CD4-positive, alpha-beta memory T cell (primary cell): ENCODE measurements at regions of chr2 and their contacts with region 1.

Region 1: DNA sequence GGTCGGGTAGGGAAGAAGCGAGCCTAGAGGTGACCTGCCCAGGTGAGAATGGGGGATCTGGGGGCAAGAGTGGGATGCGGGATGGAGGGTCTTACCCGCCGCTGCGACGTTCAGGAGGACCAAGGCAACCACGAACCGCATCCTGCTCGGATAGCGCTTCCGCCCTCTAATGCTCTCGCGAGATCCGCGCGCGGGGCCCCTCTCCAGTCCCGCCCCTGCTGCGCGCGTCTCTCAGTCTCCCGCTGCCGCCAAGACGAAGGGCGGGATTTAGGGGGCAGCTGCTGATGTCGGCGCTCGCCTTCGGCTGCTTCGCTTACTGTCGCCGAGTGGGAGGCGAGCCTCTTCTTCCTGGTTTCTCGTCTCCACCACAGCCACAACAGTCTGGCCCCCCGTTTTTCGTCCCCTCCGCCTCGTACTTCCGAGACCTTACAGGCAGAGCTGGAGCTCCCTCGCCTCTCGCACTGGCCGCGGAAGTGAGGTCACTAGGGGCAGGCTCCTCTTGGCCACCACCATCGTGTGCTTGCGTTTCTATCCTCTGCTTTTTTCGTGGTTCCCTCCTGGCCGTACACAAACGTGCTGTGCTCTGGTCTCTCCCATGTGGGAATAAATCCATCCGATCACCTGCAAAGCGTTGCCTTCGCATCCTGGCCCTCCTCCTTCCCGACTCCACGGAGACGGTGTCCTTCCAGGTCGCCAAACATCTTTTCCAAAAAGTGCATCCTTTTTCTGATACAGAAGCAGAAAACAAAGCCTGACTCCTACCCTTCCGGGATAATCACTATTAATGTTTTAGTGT is at the start of gene TGOLN2:
- DNase-seq: peak; percentile 93 to 96 (median 95)
- H3K4me3 ChIP-seq: peak within 1 kb of the TSS; percentile 99 to 100
- H3K4me3 Mint-ChIP-seq: peak within 1 kb of the TSS; percentile 92 to 100 (median 98)
- H3K27ac ChIP-seq: peak within 1 kb of the TSS; percentile 98
- H3K27ac Mint-ChIP-seq: peak within 1 kb of the TSS; percentile 97 to 100 (median 100)
- H3K4me1 ChIP-seq: peaks cover 44% of the 10 kb centered on the region
- H3K4me1 Mint-ChIP-seq: peaks cover 21 to 65% (median 34%) of the 10 kb centered on the region in 4 donors
- H3K27me3 ChIP-seq: no peaks in the 10 kb centered on the region
- H3K27me3 Mint-ChIP-seq: no peaks in the 10 kb centered on the region
- total RNA-seq, gene TGOLN2: 188 to 195 TPM

Region 2: DNA sequence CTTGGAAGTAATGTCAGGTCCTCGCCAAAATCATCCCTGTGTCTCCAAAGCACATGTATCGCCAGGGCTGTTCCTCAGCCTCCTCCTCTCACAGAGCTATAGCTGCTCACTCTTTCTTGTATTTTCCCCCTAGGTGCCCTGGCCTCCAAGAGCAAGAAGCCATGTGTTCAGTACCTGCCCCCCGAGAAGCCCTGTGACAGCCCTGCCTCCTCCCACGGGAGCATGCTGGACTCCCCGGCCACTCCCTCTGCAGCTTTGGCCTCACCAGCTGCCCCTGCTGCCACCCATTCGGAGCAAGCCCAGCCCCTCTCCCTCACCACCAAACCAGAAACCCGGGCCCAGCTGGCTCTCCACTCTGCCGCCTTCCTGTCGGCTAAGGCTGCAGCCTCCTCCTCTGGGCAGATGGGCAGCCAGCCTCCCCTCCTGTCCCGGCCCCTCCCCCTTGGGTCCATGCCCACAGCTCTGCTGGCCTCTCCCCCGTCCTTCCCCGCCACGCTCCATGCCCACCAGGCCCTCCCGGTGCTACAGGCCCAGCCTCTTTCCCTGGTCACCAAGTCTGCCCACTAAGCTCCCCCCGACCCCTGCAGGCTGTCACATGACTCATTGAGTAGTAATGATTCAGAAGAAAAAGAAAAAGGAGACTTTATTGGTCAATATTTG is 19.0 kb before region 1 on chr2:
- CTCF ChIA-PET with region 1: interaction called, 9 read pairs
- POLR2A ChIA-PET with region 1: interaction called, 268 read pairs
- intact Hi-C with region 1: loop called (anchors 2 kb)
- DNase-seq: peak in 1 of 5 donors; percentile 41
- H3K4me3 ChIP-seq: peak overlapping the region in 1 of 2 donors; percentile 14
- H3K4me3 Mint-ChIP-seq: peak overlapping the region; percentile 80 to 95 (median 87)
- H3K27ac ChIP-seq: peak overlapping the region; percentile 46
- H3K27ac Mint-ChIP-seq: peak overlapping the region; percentile 73 to 97 (median 97)
- H3K4me1 ChIP-seq: peaks cover 36% of the 10 kb centered on the region
- H3K4me1 Mint-ChIP-seq: peaks cover 19 to 48% (median 39%) of the 10 kb centered on the region in 4 donors
- H3K27me3 ChIP-seq: no peaks in the 10 kb centered on the region
- H3K27me3 Mint-ChIP-seq: peaks cover 0 to 2% of the 10 kb centered on the region in 2 donors

Region 3: GRCh38 chr2:85354286-85355072 is 26.5 kb after region 1 on chr2 and contains the starts of genes ELMOD3 and RETSAT:
- CTCF ChIA-PET with region 1: interaction called, 12 read pairs
- POLR2A ChIA-PET with region 1: interaction called, 240 read pairs
- intact Hi-C with region 1: loop called (anchors 1 kb)
- DNase-seq: peak; percentile 98 to 99 (median 99)
- H3K4me3 ChIP-seq: peak within 1 kb of the TSS; percentile 64 to 81
- H3K4me3 Mint-ChIP-seq: peak within 1 kb of the TSS; percentile 97 to 100 (median 99)
- H3K27ac ChIP-seq: peak within 1 kb of the TSS; percentile 94
- H3K27ac Mint-ChIP-seq: peak within 1 kb of the TSS; percentile 94 to 100 (median 99)
- H3K4me1 ChIP-seq: peaks cover 44% of the 10 kb centered on the region
- H3K4me1 Mint-ChIP-seq: peaks cover 28 to 74% (median 57%) of the 10 kb centered on the region in 4 donors
- H3K27me3 ChIP-seq: no peaks in the 10 kb centered on the region
- H3K27me3 Mint-ChIP-seq: no peaks in the 10 kb centered on the region
- total RNA-seq, gene ELMOD3: 29.8 to 33.2 TPM
- total RNA-seq, gene RETSAT: 33.0 to 33.4 TPM

Region 4: GRCh38 chr2:85437488-85438284 is 109.7 kb after region 1 on chr2:
- CTCF ChIA-PET with region 1: no interaction called
- POLR2A ChIA-PET with region 1: interaction called, 16 read pairs
- intact Hi-C with region 1: no loop called
- DNase-seq: peak; percentile 77 to 88 (median 81)
- H3K4me3 ChIP-seq: peak overlapping the region; percentile 36 to 52
- H3K4me3 Mint-ChIP-seq: peak overlapping the region; percentile 87 to 95 (median 91)
- H3K27ac ChIP-seq: peak overlapping the region; percentile 75
- H3K27ac Mint-ChIP-seq: peak overlapping the region; percentile 88 to 99 (median 98)
- H3K4me1 ChIP-seq: peaks cover 30% of the 10 kb centered on the region
- H3K4me1 Mint-ChIP-seq: peaks cover 9 to 38% (median 25%) of the 10 kb centered on the region in 4 donors
- H3K27me3 ChIP-seq: no peaks in the 10 kb centered on the region
- H3K27me3 Mint-ChIP-seq: no peaks in the 10 kb centered on the region

Region 5: GRCh38 chr2:85458601-85459563 is 130.9 kb after region 1 on chr2:
- CTCF ChIA-PET with region 1: no interaction called
- POLR2A ChIA-PET with region 1: no interaction called
- intact Hi-C with region 1: no loop called
- DNase-seq: no peak
- H3K4me3 ChIP-seq: no peak overlapping the region
- H3K4me3 Mint-ChIP-seq: no peak overlapping the region
- H3K27ac ChIP-seq: no peak overlapping the region
- H3K27ac Mint-ChIP-seq: no peak overlapping the region
- H3K4me1 ChIP-seq: no peaks in the 10 kb centered on the region
- H3K4me1 Mint-ChIP-seq: no peaks in the 10 kb centered on the region
- H3K27me3 ChIP-seq: no peaks in the 10 kb centered on the region
- H3K27me3 Mint-ChIP-seq: no peaks in the 10 kb centered on the region

Region 6: GRCh38 chr2:85561317-85561979 is 233.4 kb after region 1 on chr2 and contains the start of gene GGCX:
- CTCF ChIA-PET with region 1: no interaction called
- POLR2A ChIA-PET with region 1: interaction called, 12 read pairs
- intact Hi-C with region 1: no loop called
- DNase-seq: peak; percentile 86 to 95 (median 87)
- H3K4me3 ChIP-seq: peak within 1 kb of the TSS; percentile 74 to 97
- H3K4me3 Mint-ChIP-seq: peak within 1 kb of the TSS; percentile 94 to 99 (median 98)
- H3K27ac ChIP-seq: peak within 1 kb of the TSS; percentile 89
- H3K27ac Mint-ChIP-seq: peak within 1 kb of the TSS; percentile 94 to 99 (median 97)
- H3K4me1 ChIP-seq: peaks cover 19% of the 10 kb centered on the region
- H3K4me1 Mint-ChIP-seq: peaks cover 12 to 35% (median 22%) of the 10 kb centered on the region in 4 donors
- H3K27me3 ChIP-seq: no peaks in the 10 kb centered on the region
- H3K27me3 Mint-ChIP-seq: no peaks in the 10 kb centered on the region
- total RNA-seq, gene GGCX: 28.5 to 38.1 TPM

Region 7: DNA sequence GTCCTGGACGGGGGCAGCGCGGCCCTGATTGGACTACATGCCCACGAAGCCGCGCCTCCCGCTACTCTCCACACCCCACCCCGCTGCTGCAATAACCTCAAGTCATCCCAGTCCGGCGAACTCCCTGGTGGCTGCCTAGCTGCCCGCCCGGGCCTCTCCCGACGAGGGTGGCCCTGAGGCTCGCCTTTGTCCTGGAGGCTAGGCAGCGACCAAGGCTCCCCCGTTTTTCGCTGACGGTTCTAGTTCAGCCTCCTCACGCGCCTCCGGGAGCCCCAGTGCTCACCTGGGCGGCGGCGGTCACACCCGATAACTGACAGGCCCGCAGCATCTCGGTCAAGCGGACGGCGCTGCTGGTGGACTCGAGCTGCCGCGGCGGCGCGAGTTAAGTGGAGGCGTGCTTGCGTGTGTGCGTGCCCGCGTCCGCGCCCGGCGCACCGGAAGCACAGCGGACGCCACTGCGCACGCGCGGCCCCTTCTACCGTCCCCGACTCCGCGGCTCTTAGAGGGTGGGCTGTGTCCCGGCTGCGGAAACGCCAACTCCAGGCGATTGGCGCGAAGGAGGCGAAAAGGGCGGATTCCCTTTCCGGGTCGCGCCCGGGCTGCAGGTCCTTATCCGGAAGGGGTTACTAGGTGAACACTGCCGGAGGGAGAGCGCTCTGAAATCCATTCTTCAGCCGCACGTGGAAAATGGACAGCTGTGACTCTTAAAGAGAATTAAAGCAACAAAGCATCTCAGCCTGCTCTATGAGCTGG is 867.2 kb after region 1 on chr2 and contains the start of gene IMMT:
- CTCF ChIA-PET with region 1: no interaction called
- POLR2A ChIA-PET with region 1: interaction called, 13 read pairs
- intact Hi-C with region 1: no loop called
- DNase-seq: peak; percentile 92 to 95 (median 95)
- H3K4me3 ChIP-seq: peak within 1 kb of the TSS; percentile 27 to 100
- H3K4me3 Mint-ChIP-seq: peak within 1 kb of the TSS; percentile 90 to 97 (median 96)
- H3K27ac ChIP-seq: peak within 1 kb of the TSS; percentile 89
- H3K27ac Mint-ChIP-seq: peak within 1 kb of the TSS; percentile 83 to 98 (median 96)
- H3K4me1 ChIP-seq: peaks cover 57% of the 10 kb centered on the region
- H3K4me1 Mint-ChIP-seq: peaks cover 34 to 75% (median 55%) of the 10 kb centered on the region in 4 donors
- H3K27me3 ChIP-seq: no peaks in the 10 kb centered on the region
- H3K27me3 Mint-ChIP-seq: no peaks in the 10 kb centered on the region
- total RNA-seq, gene IMMT: 77.2 to 82.7 TPM